CD4-positive, alpha-beta T cell (primary cell): ENCODE measurements at regions of chr14 and their contacts with region 1.

Region 1: DNA sequence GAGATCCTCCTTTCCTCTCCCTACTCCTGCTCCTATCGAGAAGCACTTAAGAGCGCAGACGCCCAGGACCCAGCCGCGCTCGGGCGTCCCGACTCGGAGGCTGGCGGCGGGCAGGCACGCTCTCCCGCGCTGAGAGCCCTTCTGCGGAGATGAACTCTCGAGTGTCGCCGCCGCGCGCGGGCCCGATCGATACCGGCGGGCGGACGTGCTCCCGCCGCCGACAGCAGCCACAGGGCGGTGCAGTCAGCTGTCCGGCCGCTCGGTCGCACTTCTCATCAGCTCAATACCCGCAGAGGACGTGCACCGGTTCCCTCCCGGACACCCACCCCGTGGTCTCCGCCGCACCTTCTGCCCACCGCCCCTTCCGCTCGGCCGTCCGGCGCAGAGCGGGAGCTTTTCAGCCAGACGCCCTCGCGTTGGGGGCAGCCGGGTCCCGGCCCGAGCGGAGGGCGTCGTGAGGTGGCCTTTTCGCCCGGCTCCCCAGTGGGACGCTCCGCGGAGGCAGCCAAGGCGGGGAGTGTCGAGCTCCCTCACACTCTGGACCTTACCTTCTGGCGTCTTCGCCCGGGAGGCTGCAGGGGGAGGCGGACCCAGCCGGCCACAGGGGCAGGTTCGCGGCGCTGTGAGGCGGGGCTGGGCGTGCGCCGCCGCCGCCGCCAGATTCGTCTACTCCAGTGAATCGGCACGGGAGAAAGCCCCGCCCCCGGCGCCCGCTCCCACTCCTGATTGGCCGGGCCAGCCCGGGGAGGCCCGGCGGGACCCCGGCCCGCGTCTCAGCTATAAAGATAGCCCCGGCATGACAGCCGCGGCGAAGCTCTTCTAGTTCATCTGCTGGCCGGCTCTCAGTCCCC is at the start of gene INSM2:
- DNase-seq: peak in 12 of 14 experiments; percentile 4 to 66 (median 42)
- ATAC-seq: peak; percentile 43
- H3K4me3 ChIP-seq: peak within 1 kb of the TSS; percentile 57
- H3K4me3 Mint-ChIP-seq: peak within 1 kb of the TSS; percentile 82
- H3K27ac ChIP-seq: no peak within 1 kb of the TSS
- H3K27ac Mint-ChIP-seq: no peak within 1 kb of the TSS
- H3K4me1 ChIP-seq: peaks cover 28% of the 10 kb centered on the region
- H3K4me1 Mint-ChIP-seq: peaks cover 9% of the 10 kb centered on the region
- H3K27me3 ChIP-seq: peaks cover 32 to 51% of the 10 kb centered on the region in 2 experiments
- H3K27me3 Mint-ChIP-seq: peaks cover 66% of the 10 kb centered on the region
- CTCF ChIP-seq: no peak
- total RNA-seq, gene INSM2: not detected

Region 2: GRCh38 chr14:34971381-34971780 is 562.2 kb before region 1 on chr14:
- CTCF ChIA-PET with region 1: no interaction called
- POLR2A ChIA-PET with region 1: no interaction called
- intact Hi-C with region 1: no loop called
- DNase-seq: no peak
- ATAC-seq: no peak
- H3K4me3 ChIP-seq: no peak overlapping the region
- H3K4me3 Mint-ChIP-seq: no peak overlapping the region
- H3K27ac ChIP-seq: no peak overlapping the region
- H3K27ac Mint-ChIP-seq: no peak overlapping the region
- H3K4me1 ChIP-seq: peaks cover 4% of the 10 kb centered on the region
- H3K4me1 Mint-ChIP-seq: peaks cover 20% of the 10 kb centered on the region
- H3K27me3 ChIP-seq: no peaks in the 10 kb centered on the region
- H3K27me3 Mint-ChIP-seq: no peaks in the 10 kb centered on the region
- CTCF ChIP-seq: no peak

Region 3: GRCh38 chr14:35814371-35815005 is 280.9 kb after region 1 on chr14:
- CTCF ChIA-PET with region 1: no interaction called
- POLR2A ChIA-PET with region 1: no interaction called
- intact Hi-C with region 1: loop called in 1 of 2 experiments (anchors 10 kb)
- DNase-seq: peak; percentile 63 to 90 (median 76)
- ATAC-seq: peak; percentile 91
- H3K4me3 ChIP-seq: no peak overlapping the region
- H3K4me3 Mint-ChIP-seq: no peak overlapping the region
- H3K27ac ChIP-seq: no peak overlapping the region
- H3K27ac Mint-ChIP-seq: no peak overlapping the region
- H3K4me1 ChIP-seq: no peaks in the 10 kb centered on the region
- H3K4me1 Mint-ChIP-seq: peaks cover 2% of the 10 kb centered on the region
- H3K27me3 ChIP-seq: no peaks in the 10 kb centered on the region
- H3K27me3 Mint-ChIP-seq: no peaks in the 10 kb centered on the region
- CTCF ChIP-seq: peak; percentile 76